PC-9 (cell line): ENCODE measurements at regions of chr7 and their contacts with region 1.

Region 1: GRCh38 chr7:105876091-105876963 is at the start of gene ATXN7L1:
- DNase-seq: peak; percentile 86 to 94
- H3K4me3 ChIP-seq: peak within 1 kb of the TSS; percentile 96
- H3K27ac ChIP-seq: peak within 1 kb of the TSS; percentile 69
- H3K4me1 ChIP-seq: peaks cover 24% of the 10 kb centered on the region
- H3K27me3 ChIP-seq: no peaks in the 10 kb centered on the region
- CTCF ChIP-seq: peak; percentile 38
- total RNA-seq, gene ATXN7L1: 10.8 and 14.6 TPM in 2 replicates

Region 2: DNA sequence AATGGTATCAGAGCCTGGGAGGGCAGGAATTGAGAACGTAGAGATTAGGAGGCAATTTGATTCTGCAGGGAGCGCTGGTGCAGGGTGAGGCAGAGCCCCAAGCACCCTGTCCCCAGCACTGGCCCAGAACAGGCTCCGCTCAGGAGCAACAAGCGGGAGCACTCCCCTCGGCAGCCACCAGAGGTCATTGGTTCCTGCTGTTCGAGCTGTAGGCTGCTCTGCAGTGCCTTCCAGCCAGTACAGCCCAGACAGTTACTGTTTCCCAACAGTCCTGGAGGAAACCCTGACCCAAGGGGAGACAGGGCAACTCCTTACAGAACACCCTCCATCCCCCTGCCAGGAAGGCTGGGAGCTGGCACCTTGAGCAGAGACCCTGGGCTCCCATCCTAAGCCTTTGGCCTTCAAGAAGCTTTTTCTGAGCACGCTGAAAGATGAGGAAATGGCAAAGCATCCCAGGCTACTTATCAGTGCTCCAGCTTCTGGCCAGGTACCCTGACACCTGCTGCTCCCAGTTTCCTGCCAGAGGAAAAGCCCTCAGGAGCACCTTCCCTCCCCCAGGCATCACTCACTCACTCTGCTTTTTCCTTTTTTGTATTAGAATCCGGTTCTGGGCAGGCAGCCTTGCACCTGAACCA is 223.9 kb before region 1 on chr7:
- CTCF ChIA-PET with region 1: interaction called, 4 read pairs
- POLR2A ChIA-PET with region 1: no interaction called
- intact Hi-C with region 1: loop called (anchors 2 kb)
- DNase-seq: peak; percentile 43 to 79
- H3K4me3 ChIP-seq: no peak overlapping the region
- H3K27ac ChIP-seq: no peak overlapping the region
- H3K4me1 ChIP-seq: peaks cover 47% of the 10 kb centered on the region
- H3K27me3 ChIP-seq: no peaks in the 10 kb centered on the region
- CTCF ChIP-seq: peak; percentile 87

Region 3: DNA sequence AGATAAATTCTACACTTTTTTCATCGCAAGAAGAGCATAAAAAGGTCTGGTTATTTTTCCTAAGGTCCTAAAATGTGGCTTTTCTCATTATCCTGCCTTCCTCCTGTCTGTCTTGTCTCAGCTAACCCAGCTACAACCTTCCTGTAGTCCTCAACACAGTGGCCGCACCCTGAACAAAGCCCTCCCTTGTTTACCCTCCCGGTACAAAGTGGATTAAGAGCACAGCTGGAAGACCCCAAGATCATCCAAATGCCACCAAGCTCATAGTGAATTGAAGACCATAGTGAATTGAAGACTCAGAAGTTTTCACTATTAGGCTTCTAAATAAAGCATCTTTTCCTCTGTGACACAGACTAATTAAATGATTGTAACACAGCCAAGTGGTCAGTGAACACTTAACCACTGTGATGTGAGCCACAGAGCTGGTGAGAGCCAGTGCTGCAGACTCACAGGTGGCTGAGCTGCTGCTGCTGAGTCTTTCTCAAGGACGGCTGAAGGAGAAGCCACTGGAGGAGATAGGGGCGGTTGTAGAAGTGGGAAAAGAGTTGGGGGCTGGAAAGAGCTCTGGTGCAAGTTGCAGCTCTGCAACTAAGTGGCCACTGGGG is 123.6 kb before region 1 on chr7:
- CTCF ChIA-PET with region 1: no interaction called
- POLR2A ChIA-PET with region 1: no interaction called
- intact Hi-C with region 1: no loop called
- DNase-seq: no peak
- H3K4me3 ChIP-seq: no peak overlapping the region
- H3K27ac ChIP-seq: no peak overlapping the region
- H3K4me1 ChIP-seq: no peaks in the 10 kb centered on the region
- H3K27me3 ChIP-seq: no peaks in the 10 kb centered on the region
- CTCF ChIP-seq: no peak

Region 4: GRCh38 chr7:105776058-105776751 is 100.1 kb before region 1 on chr7:
- CTCF ChIA-PET with region 1: interaction called, 3 read pairs
- POLR2A ChIA-PET with region 1: no interaction called
- intact Hi-C with region 1: loop called (anchors 1 kb)
- DNase-seq: peak; percentile 96 to 99
- H3K4me3 ChIP-seq: no peak overlapping the region
- H3K27ac ChIP-seq: peak overlapping the region; percentile 87
- H3K4me1 ChIP-seq: peaks cover 33% of the 10 kb centered on the region
- H3K27me3 ChIP-seq: no peaks in the 10 kb centered on the region
- CTCF ChIP-seq: no peak

Region 5: GRCh38 chr7:105849122-105849855 is 27.0 kb before region 1 on chr7:
- CTCF ChIA-PET with region 1: no interaction called
- POLR2A ChIA-PET with region 1: no interaction called
- intact Hi-C with region 1: loop called (anchors 1 kb)
- DNase-seq: peak; percentile 83
- H3K4me3 ChIP-seq: no peak overlapping the region
- H3K27ac ChIP-seq: peak overlapping the region; percentile 44
- H3K4me1 ChIP-seq: peaks cover 21% of the 10 kb centered on the region
- H3K27me3 ChIP-seq: no peaks in the 10 kb centered on the region
- CTCF ChIP-seq: no peak

Region 6: GRCh38 chr7:106041140-106041717 is 164.9 kb after region 1 on chr7:
- CTCF ChIA-PET with region 1: no interaction called
- POLR2A ChIA-PET with region 1: no interaction called
- intact Hi-C with region 1: loop called (anchors 5 kb)
- DNase-seq: peak; percentile 39 to 48
- H3K4me3 ChIP-seq: no peak overlapping the region
- H3K27ac ChIP-seq: no peak overlapping the region
- H3K4me1 ChIP-seq: peaks cover 6% of the 10 kb centered on the region; the same call in 1 of the 2 replicates
- H3K27me3 ChIP-seq: 0 out of 2 replicates have a peak, but pooled peaks cover 7% of the 10 kb centered on the region
- CTCF ChIP-seq: peak; percentile 80